ENCODE measurements at regions of chr17 and their contacts with region 1.

Region 1: GRCh38 chr17:17440010-17440843 is 36.6 kb upstream of the MED9 start:
- DNase-seq: peak; percentile 90
- ATAC-seq: peak; percentile 99
- H3K4me3 Mint-ChIP-seq: no peak overlapping the region
- H3K27ac Mint-ChIP-seq: no peak overlapping the region
- H3K4me1 Mint-ChIP-seq: peaks cover 5% of the 10 kb centered on the region
- H3K27me3 Mint-ChIP-seq: no peaks in the 10 kb centered on the region
- CTCF ChIP-seq: peak; percentile 82

Region 2: DNA sequence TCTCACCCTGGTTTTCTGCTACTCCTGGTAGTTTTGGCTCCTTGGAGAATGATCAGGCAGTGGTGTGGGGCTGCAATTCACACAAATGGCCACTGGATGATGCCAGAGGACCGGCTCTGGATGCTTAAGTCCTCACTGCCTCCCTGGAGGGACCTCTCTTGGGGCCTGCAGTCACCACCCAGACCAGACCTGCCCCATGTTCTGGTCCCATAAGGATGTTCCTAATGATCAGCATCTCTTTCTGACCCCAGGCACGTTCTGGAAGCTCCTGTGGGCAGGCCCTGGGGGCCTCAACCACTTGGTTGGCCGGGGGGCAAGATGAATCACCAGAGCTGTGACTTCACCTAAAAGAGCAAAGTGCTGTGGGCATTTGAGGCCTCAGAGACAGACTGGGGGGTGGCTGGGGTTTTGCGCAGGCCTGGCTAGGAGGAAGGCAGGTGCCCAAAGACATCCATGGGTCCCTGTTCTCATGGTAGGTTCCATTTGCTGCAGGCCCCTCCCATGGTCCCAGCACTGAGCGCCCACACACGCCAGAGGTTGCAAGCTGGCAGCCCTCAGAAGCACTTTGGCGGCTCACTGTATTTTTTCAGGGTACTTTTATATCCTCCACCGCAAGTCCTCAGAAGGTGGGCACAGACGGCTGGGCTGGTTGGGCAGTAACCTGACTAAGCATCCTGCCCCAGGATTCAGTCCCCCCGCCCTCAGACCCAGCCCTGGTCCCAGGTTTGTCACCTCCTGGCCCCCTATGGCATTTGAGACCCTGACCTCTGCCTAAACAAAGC is 83.9 kb before region 1 on chr17:
- CTCF ChIA-PET with region 1: interaction called, 16 read pairs
- POLR2A ChIA-PET with region 1: no interaction called
- intact Hi-C with region 1: loop called (anchors 1 kb)
- DNase-seq: peak; percentile 85
- ATAC-seq: peak; percentile 92
- H3K4me3 Mint-ChIP-seq: no peak overlapping the region
- H3K27ac Mint-ChIP-seq: no peak overlapping the region
- H3K4me1 Mint-ChIP-seq: no peaks in the 10 kb centered on the region
- H3K27me3 Mint-ChIP-seq: no peaks in the 10 kb centered on the region
- CTCF ChIP-seq: peak; percentile 99

Region 3: DNA sequence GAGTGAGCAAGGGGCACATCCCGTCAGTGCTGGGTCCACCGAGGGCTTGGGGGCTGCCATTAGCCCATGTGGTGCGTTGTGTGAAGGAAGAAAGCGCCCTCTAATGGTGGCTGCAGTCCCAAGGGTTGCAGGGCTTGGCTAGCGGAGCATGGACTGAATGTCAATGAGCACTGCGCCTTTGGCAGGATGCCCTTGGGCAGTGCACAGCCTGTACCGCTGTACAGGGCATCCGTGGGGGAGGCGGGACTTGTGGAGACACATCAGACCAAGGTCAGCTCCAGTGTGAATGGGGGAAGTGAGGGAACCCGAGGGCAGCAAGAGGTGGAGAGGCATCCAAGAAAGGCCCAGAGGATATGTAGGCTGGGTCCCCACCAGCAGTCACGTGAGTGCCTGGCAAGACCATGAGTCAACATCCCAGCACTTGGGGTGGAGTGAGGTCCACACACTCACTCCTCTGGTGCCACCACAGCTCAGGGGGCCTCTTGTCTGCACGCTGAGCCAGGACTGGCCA is 38.9 kb before region 1 on chr17:
- CTCF ChIA-PET with region 1: no interaction called
- POLR2A ChIA-PET with region 1: no interaction called
- intact Hi-C with region 1: no loop called
- DNase-seq: peak; percentile 38
- ATAC-seq: no peak
- H3K4me3 Mint-ChIP-seq: no peak overlapping the region
- H3K27ac Mint-ChIP-seq: no peak overlapping the region
- H3K4me1 Mint-ChIP-seq: peaks cover 49% of the 10 kb centered on the region
- H3K27me3 Mint-ChIP-seq: no peaks in the 10 kb centered on the region
- CTCF ChIP-seq: peak; percentile 32

Region 4: GRCh38 chr17:17420561-17421269 is 19.5 kb before region 1 on chr17:
- CTCF ChIA-PET with region 1: no interaction called
- POLR2A ChIA-PET with region 1: no interaction called
- intact Hi-C with region 1: no loop called
- DNase-seq: no peak
- ATAC-seq: no peak
- H3K4me3 Mint-ChIP-seq: no peak overlapping the region
- H3K27ac Mint-ChIP-seq: no peak overlapping the region
- H3K4me1 Mint-ChIP-seq: peaks cover 14% of the 10 kb centered on the region
- H3K27me3 Mint-ChIP-seq: no peaks in the 10 kb centered on the region
- CTCF ChIP-seq: no peak

Region 5: GRCh38 chr17:17491031-17491471 is 50.8 kb after region 1 on chr17:
- CTCF ChIA-PET with region 1: no interaction called
- POLR2A ChIA-PET with region 1: no interaction called
- intact Hi-C with region 1: no loop called
- DNase-seq: no peak
- ATAC-seq: no peak
- H3K4me3 Mint-ChIP-seq: no peak overlapping the region
- H3K27ac Mint-ChIP-seq: no peak overlapping the region
- H3K4me1 Mint-ChIP-seq: peaks cover 36% of the 10 kb centered on the region
- H3K27me3 Mint-ChIP-seq: peaks cover 8% of the 10 kb centered on the region
- CTCF ChIP-seq: no peak

Region 6: GRCh38 chr17:17641621-17642409 is 201.6 kb after region 1 on chr17:
- CTCF ChIA-PET with region 1: no interaction called
- POLR2A ChIA-PET with region 1: no interaction called
- intact Hi-C with region 1: no loop called
- DNase-seq: peak; percentile 85
- ATAC-seq: peak; percentile 97
- H3K4me3 Mint-ChIP-seq: no peak overlapping the region
- H3K27ac Mint-ChIP-seq: no peak overlapping the region
- H3K4me1 Mint-ChIP-seq: no peaks in the 10 kb centered on the region
- H3K27me3 Mint-ChIP-seq: no peaks in the 10 kb centered on the region
- CTCF ChIP-seq: peak; percentile 82